ENCODE measurements at regions of chr20 and their contacts with region 1.

Region 1: GRCh38 chr20:62616728-62617621 is 25.3 kb upstream of the SLCO4A1 start:
- DNase-seq: peak; percentile 92 to 96
- H3K4me3 ChIP-seq: no peak overlapping the region
- H3K4me3 Mint-ChIP-seq: no peak overlapping the region
- H3K27ac Mint-ChIP-seq: peak overlapping the region; percentile 32
- H3K4me1 ChIP-seq: peaks cover 16% of the 10 kb centered on the region
- H3K4me1 Mint-ChIP-seq: peaks cover 8% of the 10 kb centered on the region
- H3K27me3 ChIP-seq: no peaks in the 10 kb centered on the region
- H3K27me3 Mint-ChIP-seq: no peaks in the 10 kb centered on the region
- CTCF ChIP-seq: peak; percentile 100

Region 2: DNA sequence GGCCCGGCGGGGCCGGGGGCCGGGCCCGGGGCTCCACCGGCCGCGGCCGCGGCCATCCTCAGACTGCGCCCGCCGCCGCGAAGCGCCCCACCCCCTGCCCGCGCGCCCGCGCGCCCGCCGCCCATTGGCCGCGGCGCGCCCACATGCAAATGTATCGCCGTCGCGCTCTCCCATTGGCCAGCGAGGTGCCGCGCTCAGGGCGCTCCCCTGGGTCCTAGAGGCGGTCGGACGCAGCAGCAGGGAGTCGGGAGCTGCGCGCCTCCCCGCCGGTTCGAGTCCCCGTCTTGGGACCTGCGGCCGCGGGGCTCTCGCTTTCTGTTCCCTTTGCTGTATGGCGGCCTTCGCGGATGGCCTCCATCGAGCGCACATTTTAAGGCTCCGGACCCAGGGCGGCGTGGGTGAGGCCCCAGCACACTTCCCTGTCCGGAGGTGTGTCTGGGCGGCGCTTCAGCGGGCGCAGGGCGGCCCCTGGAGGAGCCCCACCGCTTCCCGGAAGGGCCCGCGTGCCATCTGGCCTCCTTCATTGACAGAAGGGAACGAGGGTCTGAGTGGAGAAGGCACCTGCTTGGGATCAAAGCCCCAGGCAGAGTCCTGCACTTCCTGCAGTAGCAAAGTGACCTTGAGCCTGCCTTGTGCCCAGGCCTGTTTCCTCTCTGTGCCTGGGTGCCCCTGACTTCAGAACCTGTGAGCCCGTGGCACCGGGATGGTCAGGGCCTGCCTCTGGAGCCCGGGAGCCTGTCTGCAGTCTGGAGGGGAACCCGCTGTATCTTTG is 209.6 kb before region 1 on chr20 and contains the start of gene CABLES2:
- CTCF ChIA-PET with region 1: interaction called, 6 read pairs
- POLR2A ChIA-PET with region 1: no interaction called
- intact Hi-C with region 1: loop called (anchors 2 kb)
- DNase-seq: peak; percentile 99 to 100
- H3K4me3 ChIP-seq: peak within 1 kb of the TSS; percentile 95
- H3K4me3 Mint-ChIP-seq: peak within 1 kb of the TSS; percentile 78
- H3K27ac Mint-ChIP-seq: peak within 1 kb of the TSS; percentile 83
- H3K4me1 ChIP-seq: peaks cover 58% of the 10 kb centered on the region
- H3K4me1 Mint-ChIP-seq: peaks cover 41% of the 10 kb centered on the region
- H3K27me3 ChIP-seq: no peaks in the 10 kb centered on the region
- H3K27me3 Mint-ChIP-seq: no peaks in the 10 kb centered on the region
- CTCF ChIP-seq: peak in 1 of 2 experiments; percentile 54
- total RNA-seq, gene CABLES2: 30.7 and 36.4 TPM in 2 replicates

Region 3: GRCh38 chr20:62477669-62478455 is 139.1 kb before region 1 on chr20:
- CTCF ChIA-PET with region 1: interaction called, 55 read pairs
- POLR2A ChIA-PET with region 1: no interaction called
- intact Hi-C with region 1: loop called (anchors 1 kb)
- DNase-seq: peak; percentile 81 to 86
- H3K4me3 ChIP-seq: no peak overlapping the region
- H3K4me3 Mint-ChIP-seq: no peak overlapping the region
- H3K27ac Mint-ChIP-seq: peak overlapping the region; percentile 72
- H3K4me1 ChIP-seq: peaks cover 57% of the 10 kb centered on the region
- H3K4me1 Mint-ChIP-seq: peaks cover 39% of the 10 kb centered on the region
- H3K27me3 ChIP-seq: no peaks in the 10 kb centered on the region
- H3K27me3 Mint-ChIP-seq: no peaks in the 10 kb centered on the region
- CTCF ChIP-seq: peak; percentile 88 to 96

Region 4: GRCh38 chr20:62516345-62516744 is 100.6 kb before region 1 on chr20:
- CTCF ChIA-PET with region 1: interaction called, 10 read pairs
- POLR2A ChIA-PET with region 1: no interaction called
- intact Hi-C with region 1: no loop called
- DNase-seq: peak in 1 of 2 experiments; percentile 60
- H3K4me3 ChIP-seq: no peak overlapping the region
- H3K4me3 Mint-ChIP-seq: no peak overlapping the region
- H3K27ac Mint-ChIP-seq: no peak overlapping the region
- H3K4me1 ChIP-seq: peaks cover 9% of the 10 kb centered on the region
- H3K4me1 Mint-ChIP-seq: peaks cover 6% of the 10 kb centered on the region
- H3K27me3 ChIP-seq: no peaks in the 10 kb centered on the region
- H3K27me3 Mint-ChIP-seq: no peaks in the 10 kb centered on the region
- CTCF ChIP-seq: peak; percentile 38 to 74

Region 5: GRCh38 chr20:62583420-62583920 is 33.5 kb before region 1 on chr20:
- CTCF ChIA-PET with region 1: interaction called, 13 read pairs
- POLR2A ChIA-PET with region 1: no interaction called
- intact Hi-C with region 1: loop called (anchors 1 kb)
- DNase-seq: peak in 1 of 2 experiments; percentile 69
- H3K4me3 ChIP-seq: no peak overlapping the region
- H3K4me3 Mint-ChIP-seq: no peak overlapping the region
- H3K27ac Mint-ChIP-seq: no peak overlapping the region
- H3K4me1 ChIP-seq: no peaks in the 10 kb centered on the region
- H3K4me1 Mint-ChIP-seq: peaks cover 6% of the 10 kb centered on the region
- H3K27me3 ChIP-seq: no peaks in the 10 kb centered on the region
- H3K27me3 Mint-ChIP-seq: peaks cover 21% of the 10 kb centered on the region
- CTCF ChIP-seq: peak; percentile 33 to 76

Measured in Caco-2 (cell line).